Esophagus squamous epithelium (tissue), 5 donors: ENCODE measurements at regions of chr14 and their contacts with region 1.

Region 1: DNA sequence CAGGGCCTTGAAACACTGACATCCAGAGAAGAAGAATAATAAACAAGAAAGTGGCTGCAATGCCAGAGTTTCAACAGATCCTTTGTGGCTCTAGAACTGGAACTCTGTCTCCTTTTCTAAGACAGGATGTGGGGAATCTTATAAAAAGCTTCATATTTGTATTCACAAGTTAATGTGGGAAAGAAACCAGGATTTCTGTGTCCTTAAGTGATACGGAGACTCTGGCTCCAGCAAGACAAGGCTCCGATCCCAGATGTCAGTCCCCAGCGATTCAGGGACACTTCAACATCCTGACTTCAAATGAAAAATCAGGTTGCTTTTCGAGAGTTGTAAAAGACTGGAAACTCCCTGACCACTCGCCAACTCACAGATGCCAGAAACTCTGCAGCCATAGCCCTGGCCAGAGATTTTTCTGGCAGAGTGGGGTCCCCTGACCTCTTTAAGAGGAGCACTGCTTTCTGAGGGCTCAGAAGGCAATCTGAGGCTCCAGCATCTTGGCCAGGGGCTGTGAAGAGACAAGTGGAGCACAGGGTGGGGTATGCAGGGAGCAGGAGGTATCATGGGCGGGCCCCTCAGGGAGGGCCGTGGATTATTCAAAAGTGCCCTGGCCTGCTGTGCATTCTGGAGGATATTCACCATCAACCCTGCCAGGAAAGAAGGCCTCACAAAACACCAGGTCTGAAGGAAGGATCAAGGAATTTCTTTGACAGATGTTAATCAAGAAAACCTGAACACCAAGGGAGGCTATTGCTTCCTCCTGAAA is 53.3 kb downstream of the TMX1 start:
- DNase-seq: no peak
- H3K4me3 ChIP-seq: no peak overlapping the region
- H3K27ac ChIP-seq: peak overlapping the region; percentile 16 to 69 (median 58)
- H3K4me1 ChIP-seq: peaks cover 0 to 36% (median 3%) of the 10 kb centered on the region in 3 donors
- H3K27me3 ChIP-seq: no peaks in the 10 kb centered on the region
- CTCF ChIP-seq: no peak
- POLR2A ChIP-seq: no peak

Region 2: GRCh38 chr14:51251458-51251857 is 41.9 kb before region 1 on chr14:
- intact Hi-C with region 1: no loop called
- DNase-seq: no peak
- H3K4me3 ChIP-seq: no peak overlapping the region
- H3K27ac ChIP-seq: no peak overlapping the region
- H3K4me1 ChIP-seq: peaks cover 0 to 13% (median 0%) of the 10 kb centered on the region in 3 donors
- H3K27me3 ChIP-seq: no peaks in the 10 kb centered on the region
- CTCF ChIP-seq: no peak
- POLR2A ChIP-seq: no peak

Region 3: DNA sequence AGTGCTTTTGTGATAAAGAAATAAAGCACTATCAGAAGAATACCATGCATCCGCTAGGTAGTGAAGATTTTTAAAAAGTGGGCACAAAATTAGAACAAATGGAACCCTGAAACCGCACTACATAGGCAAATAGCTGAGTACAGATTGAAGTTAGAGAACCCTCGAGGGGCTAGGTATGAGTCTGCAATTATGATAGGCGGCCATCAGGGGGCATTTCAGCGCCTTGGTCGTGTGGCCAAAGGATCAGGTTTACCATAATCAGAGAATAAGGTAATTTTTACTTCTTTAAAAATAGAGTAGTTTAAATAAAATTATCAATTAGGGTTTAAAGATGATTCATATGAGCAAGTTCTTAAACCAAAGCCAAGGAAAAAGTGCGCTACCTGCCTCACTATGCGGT is 76.5 kb after region 1 on chr14:
- intact Hi-C with region 1: loop called (anchors 10 kb)
- DNase-seq: no peak
- H3K4me3 ChIP-seq: no peak overlapping the region
- H3K27ac ChIP-seq: peak overlapping the region in 2 of 4 donors; percentile 22 to 62
- H3K4me1 ChIP-seq: peaks cover 4 to 68% (median 10%) of the 10 kb centered on the region in 3 donors
- H3K27me3 ChIP-seq: no peaks in the 10 kb centered on the region
- CTCF ChIP-seq: peak in 4 of 6 experiments; percentile 7 to 47 (median 24)
- POLR2A ChIP-seq: no peak

Region 4: DNA sequence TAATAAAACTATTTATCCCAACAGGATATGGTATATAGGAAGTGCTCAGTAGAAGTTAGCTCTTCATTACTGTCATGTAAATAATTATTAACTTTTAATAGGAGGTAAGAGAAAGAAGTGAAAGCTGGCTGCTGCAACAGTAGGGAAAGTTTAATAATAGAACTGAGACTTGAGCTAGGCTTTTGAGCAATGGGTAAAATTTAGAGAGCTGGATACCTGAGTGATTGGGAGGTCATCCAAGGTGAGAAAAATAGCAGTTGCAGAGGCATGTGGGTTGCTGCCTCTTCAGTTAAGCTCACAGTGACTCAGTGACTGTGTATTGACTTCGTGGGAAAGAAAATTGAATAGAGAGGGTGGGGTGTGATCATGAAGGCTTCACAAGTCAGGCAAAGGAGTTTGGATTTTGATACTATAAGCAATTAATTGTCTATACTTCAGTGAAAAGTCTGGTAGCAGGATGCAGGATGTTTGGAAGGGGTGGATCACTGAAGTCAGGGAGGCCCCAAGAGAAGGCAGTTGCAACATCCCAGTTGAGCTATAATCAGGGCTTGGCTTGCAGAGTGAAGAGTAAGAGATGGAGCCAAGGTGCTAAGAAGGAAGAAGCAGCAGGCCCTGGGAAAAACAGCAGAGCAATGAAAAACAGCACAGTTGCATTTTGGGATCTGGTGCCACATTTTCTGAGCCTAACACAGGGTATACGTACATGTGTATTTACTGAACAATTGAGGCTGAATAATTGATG is 186.4 kb after region 1 on chr14:
- intact Hi-C with region 1: no loop called
- DNase-seq: no peak
- H3K4me3 ChIP-seq: no peak overlapping the region
- H3K27ac ChIP-seq: peak overlapping the region; percentile 50 to 80 (median 56)
- H3K4me1 ChIP-seq: peaks cover 3 to 81% (median 14%) of the 10 kb centered on the region in 3 donors
- H3K27me3 ChIP-seq: no peaks in the 10 kb centered on the region
- CTCF ChIP-seq: no peak
- POLR2A ChIP-seq: no peak